ENCODE measurements at regions of chr11 and their contacts with region 1.

Region 1: DNA sequence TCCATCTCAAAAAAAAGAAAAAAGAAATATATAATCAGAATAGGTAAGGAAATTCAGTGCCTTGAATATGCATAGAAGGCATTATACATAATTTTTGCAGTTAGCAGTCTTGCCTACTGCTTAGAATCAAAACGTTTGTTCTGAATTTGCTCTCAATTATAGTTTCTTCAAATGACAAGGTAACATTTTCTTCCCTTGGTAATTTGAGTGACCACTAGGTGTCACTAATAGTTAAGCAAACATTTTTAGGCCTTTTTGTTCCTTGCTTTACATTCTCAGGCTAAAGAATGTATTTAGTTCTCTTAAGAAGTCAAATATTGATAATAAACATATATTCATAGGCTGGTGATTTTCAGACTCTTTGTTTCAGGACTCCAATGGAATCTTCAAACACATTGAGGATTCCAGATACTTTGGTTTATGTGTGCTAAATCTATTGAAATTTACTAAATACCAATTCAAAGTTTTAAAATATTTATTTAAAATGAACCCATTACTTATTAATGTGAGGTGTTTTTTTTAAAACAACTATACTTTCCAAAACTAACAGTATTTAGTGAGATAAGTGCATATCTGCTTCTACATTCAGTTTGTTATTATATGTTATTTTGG is 55.0 kb upstream of the DEPDC7 start:
- DNase-seq: no peak
- H3K4me3 ChIP-seq: no peak overlapping the region
- H3K27ac ChIP-seq: no peak overlapping the region
- H3K4me1 ChIP-seq: no peaks in the 10 kb centered on the region
- H3K27me3 ChIP-seq: no peaks in the 10 kb centered on the region
- CTCF ChIP-seq: peak; percentile 67 to 73 (median 71)
- EP300 ChIP-seq: no peak
- POLR2A ChIP-seq: no peak

Region 2: GRCh38 chr11:32870676-32871075 is 90.0 kb before region 1 on chr11:
- in situ Hi-C with region 1: no loop called
- intact Hi-C with region 1: no loop called
- DNase-seq: no peak
- H3K4me3 ChIP-seq: no peak overlapping the region
- H3K27ac ChIP-seq: no peak overlapping the region
- H3K4me1 ChIP-seq: no peaks in the 10 kb centered on the region
- H3K27me3 ChIP-seq: no peaks in the 10 kb centered on the region
- CTCF ChIP-seq: peak in 1 of 5 experiments; percentile 4
- EP300 ChIP-seq: no peak
- POLR2A ChIP-seq: no peak

Region 3: DNA sequence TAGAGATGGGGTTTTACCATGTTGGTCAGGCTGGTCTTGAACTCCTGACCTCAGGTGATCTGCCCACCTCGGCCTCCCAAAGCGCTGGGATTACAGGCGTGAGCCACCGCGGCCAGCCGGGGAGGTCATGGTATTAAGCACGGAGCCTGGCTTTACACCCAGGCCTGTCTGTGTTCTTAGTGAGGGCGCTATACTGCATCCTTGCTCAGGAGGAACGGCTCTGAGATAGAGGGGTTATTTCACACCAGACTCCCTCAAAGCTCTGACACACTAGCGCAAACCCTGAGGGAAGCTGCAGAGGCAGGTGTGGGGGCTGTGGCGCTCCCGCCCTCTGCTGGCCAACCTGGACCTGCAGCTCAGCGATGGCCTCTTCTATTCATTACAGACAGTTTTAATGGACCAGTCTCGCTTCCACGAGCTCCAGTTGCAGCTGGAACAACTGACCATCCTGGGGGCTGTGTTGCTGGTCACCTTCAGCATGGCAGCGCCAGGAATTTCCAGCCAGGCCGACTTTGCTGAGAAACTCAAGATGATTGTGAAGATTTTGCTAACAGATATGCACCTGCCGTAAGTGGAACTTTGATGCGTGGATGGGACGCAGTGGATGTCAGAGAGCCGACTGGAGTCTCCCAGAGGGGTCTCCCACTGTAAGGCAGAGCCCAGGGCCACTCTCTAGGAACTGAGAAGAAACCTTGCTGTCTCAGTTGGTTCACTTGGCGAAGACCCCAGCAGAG is 105.0 kb after region 1 on chr11:
- in situ Hi-C with region 1: loop called (anchors 5 to 10 kb)
- intact Hi-C with region 1: loop called (anchors 2 kb)
- DNase-seq: peak; percentile 76
- H3K4me3 ChIP-seq: no peak overlapping the region
- H3K27ac ChIP-seq: no peak overlapping the region
- H3K4me1 ChIP-seq: peaks cover 22 to 47% (median 24%) of the 10 kb centered on the region in 4 donors
- H3K27me3 ChIP-seq: no peaks in the 10 kb centered on the region
- CTCF ChIP-seq: peak; percentile 87 to 92 (median 88)
- EP300 ChIP-seq: no peak
- POLR2A ChIP-seq: no peak

Region 4: DNA sequence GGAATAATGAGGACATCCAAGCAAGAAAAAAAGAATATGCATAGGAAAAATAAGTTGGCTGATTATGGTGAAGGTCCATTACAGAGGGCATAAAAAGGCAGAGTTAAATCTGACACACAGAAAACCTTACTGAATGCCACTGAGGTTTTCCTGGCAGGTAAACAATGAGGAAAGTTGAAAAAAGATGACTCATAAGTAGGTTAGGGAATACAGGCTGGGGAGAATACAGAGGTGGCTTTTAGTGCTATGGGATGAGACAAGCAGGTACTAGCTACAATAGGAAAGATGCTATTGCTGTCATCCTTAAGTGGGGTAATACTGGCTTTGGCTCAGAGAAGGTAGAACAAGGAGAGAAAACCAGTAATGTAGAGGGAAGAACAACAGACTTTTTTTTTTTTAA is 155.9 kb after region 1 on chr11:
- in situ Hi-C with region 1: no loop called
- intact Hi-C with region 1: no loop called
- DNase-seq: no peak
- H3K4me3 ChIP-seq: no peak overlapping the region
- H3K27ac ChIP-seq: no peak overlapping the region
- H3K4me1 ChIP-seq: peaks cover 0 to 7% (median 0%) of the 10 kb centered on the region in 4 donors
- H3K27me3 ChIP-seq: no peaks in the 10 kb centered on the region
- CTCF ChIP-seq: no peak
- EP300 ChIP-seq: no peak
- POLR2A ChIP-seq: no peak